ENCODE measurements at regions of chr7 and their contacts with region 1.

Region 1: GRCh38 chr7:18352339-18353255 is 143.0 kb upstream of the HDAC9 start:
- DNase-seq: peak; percentile 45
- H3K4me3 ChIP-seq: no peak overlapping the region
- H3K27ac ChIP-seq: no peak overlapping the region
- H3K27me3 ChIP-seq: no peaks in the 10 kb centered on the region
- CTCF ChIP-seq: peak; percentile 63

Region 2: GRCh38 chr7:17716816-17717215 is 635.8 kb before region 1 on chr7:
- CTCF ChIA-PET with region 1: no interaction called
- POLR2A ChIA-PET with region 1: no interaction called
- DNase-seq: no peak
- H3K4me3 ChIP-seq: no peak overlapping the region
- H3K27ac ChIP-seq: no peak overlapping the region
- H3K27me3 ChIP-seq: no peaks in the 10 kb centered on the region
- CTCF ChIP-seq: no peak

Region 3: DNA sequence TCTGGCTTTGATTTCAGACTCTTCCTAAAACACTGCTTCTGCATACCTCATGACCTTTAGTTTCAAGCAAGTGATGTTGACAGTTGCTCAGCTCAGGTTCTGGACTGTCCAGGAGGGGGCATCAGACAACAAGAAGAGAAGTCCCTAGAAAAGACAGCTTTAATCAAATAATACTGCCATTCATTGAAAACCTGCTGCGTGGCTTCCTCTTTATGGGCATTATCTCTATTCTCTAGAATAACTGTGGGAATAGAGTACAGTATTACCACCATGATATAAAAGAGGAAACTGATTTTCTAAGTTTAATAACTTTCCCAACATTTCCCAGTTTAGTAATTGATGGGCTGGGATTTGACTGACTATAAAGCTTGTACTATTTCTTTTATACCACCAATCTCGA is 582.7 kb before region 1 on chr7:
- CTCF ChIA-PET with region 1: interaction called, 24 read pairs
- POLR2A ChIA-PET with region 1: no interaction called
- DNase-seq: peak; percentile 42
- H3K4me3 ChIP-seq: no peak overlapping the region
- H3K27ac ChIP-seq: no peak overlapping the region
- H3K27me3 ChIP-seq: no peaks in the 10 kb centered on the region
- CTCF ChIP-seq: peak; percentile 82

Region 4: GRCh38 chr7:18570890-18571478 is 218.4 kb after region 1 on chr7:
- CTCF ChIA-PET with region 1: interaction called, 237 read pairs
- POLR2A ChIA-PET with region 1: no interaction called
- DNase-seq: no peak
- H3K4me3 ChIP-seq: no peak overlapping the region
- H3K27ac ChIP-seq: no peak overlapping the region
- H3K27me3 ChIP-seq: no peaks in the 10 kb centered on the region
- CTCF ChIP-seq: peak; percentile 49

Region 5: GRCh38 chr7:18590744-18591340 is 238.2 kb after region 1 on chr7:
- CTCF ChIA-PET with region 1: interaction called, 73 read pairs
- POLR2A ChIA-PET with region 1: no interaction called
- DNase-seq: no peak
- H3K4me3 ChIP-seq: no peak overlapping the region
- H3K27ac ChIP-seq: no peak overlapping the region
- H3K27me3 ChIP-seq: no peaks in the 10 kb centered on the region
- CTCF ChIP-seq: peak; percentile 75

Region 6: GRCh38 chr7:18666107-18666728 is 313.6 kb after region 1 on chr7:
- CTCF ChIA-PET with region 1: interaction called, 46 read pairs
- POLR2A ChIA-PET with region 1: no interaction called
- DNase-seq: peak; percentile 24
- H3K4me3 ChIP-seq: no peak overlapping the region
- H3K27ac ChIP-seq: no peak overlapping the region
- H3K27me3 ChIP-seq: no peaks in the 10 kb centered on the region
- CTCF ChIP-seq: peak; percentile 89

Region 7: DNA sequence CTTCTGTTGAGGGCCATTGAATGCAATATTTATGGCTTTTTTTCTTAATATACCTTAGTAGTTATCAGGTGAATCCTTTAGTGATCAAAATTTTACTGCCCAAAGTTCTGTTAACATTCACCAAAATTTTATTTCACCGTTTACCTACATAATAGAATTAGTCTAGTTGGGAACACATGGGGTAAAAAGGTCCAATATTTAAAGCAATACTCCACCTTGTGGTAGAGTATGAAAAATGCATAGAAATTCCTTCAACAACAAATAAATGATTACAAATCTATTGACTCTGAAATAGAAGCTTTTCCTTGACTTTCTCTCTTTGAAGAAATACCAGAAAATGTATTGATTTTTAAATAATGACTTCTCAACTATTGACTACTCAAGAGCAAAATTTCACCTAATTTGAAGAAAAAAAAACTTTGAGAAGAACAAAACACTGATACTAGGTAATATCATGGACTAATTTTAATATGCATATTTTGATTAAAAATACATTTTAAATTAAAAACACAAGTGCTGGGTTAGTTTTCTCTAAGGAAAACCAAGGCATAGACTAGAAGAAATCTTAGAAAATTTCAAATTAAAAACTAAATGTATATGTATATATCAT is 1312.9 kb after region 1 on chr7:
- CTCF ChIA-PET with region 1: interaction called, 15 read pairs
- POLR2A ChIA-PET with region 1: no interaction called
- DNase-seq: peak; percentile 1
- H3K4me3 ChIP-seq: no peak overlapping the region
- H3K27ac ChIP-seq: no peak overlapping the region
- H3K27me3 ChIP-seq: no peaks in the 10 kb centered on the region
- CTCF ChIP-seq: peak; percentile 67

Measured in AG04450 (cell line).